Endothelial cell of umbilical vein (primary cell): ENCODE measurements at regions of chr13 and their contacts with region 1.

Region 1: DNA sequence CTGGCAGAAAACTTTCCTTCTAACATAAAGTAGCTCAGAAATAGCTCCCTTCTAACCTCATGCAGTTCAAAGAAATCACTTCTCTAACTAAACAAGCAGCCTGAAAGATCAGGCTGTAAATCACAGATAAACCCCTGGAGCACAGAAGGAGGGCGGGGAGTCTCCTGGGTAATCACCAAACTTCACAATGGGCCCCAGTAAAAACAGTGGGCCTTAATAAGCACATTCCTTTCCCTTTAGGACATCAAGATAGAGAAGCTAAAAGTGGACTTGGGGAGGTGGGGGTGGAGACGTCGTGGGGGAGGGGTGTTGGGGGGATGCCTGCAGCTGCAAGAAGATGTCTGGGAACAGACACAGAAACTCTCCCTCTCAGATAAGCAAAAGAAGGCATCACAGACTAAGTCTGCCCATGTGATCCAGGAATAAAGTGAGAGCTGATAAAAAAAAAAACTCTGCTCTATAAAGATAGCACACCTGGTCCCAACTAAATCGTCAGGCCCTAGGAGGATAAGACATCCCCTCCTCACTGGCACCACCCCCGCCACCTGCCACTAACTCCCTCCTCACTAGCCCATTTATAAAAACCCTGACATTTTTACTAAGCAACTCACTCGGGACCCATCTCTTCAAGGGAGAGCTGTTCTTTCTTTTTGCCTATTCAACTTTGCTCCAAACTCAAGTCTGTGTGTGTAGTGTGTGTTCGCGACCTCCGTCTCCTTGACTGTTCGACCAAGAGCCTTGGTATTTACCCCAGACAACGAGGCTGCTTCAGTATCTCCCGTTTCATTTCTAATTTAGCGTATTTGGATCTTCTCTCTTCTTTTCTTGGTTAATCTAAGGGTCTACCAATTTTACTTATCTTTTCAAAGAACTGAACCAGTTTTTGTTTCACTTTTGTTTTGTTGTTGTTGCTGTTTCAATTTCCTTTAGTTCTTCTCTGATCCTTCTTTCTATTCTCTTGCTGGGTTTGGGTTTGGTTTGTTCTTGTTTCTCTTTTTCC is 31.7 kb downstream of the DNAJC15 start:
- DNase-seq: peak; percentile 69
- H3K4me3 ChIP-seq: peak overlapping the region; percentile 37 to 85 (median 69)
- H3K27ac ChIP-seq: peak overlapping the region; percentile 79
- H3K4me1 ChIP-seq: peaks cover 29% of the 10 kb centered on the region
- H3K27me3 ChIP-seq: no peaks in the 10 kb centered on the region
- CTCF ChIP-seq: no peak
- POLR2A ChIP-seq: no peak

Region 2: DNA sequence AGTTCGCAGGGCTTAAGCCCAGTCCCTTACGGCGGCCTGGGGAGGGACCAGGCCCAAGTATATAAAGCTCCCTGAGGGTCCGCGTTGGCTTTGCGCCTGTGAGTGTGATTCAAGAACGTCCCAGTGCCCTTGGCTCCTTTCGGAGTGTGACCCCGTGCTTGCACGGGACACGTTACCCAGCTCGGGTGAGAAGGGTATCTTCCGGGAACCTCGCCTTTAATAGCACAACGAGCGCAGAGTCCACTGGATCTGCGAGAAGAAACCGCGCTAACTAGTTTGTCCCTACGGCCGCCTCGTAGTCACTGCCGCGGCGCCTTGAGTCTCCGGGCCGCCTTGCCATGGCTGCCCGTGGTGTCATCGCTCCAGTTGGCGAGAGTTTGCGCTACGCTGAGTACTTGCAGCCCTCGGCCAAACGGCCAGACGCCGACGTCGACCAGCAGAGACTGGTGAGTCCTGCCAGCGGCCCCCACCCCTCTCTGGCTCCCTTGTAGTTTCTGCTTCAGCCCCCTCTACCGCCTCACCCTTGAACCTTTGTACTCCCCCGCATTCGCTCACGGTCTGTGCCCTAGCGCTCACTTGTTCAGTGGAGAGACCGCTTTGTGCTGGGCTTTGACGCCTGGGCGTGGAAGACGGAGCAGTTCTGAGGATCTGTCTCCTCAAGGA is 31.7 kb before region 1 on chr13 and contains the start of gene DNAJC15:
- CTCF ChIA-PET with region 1: interaction called, 6 read pairs
- POLR2A ChIA-PET with region 1: no interaction called
- dilution Hi-C with region 1: no loop called
- intact Hi-C with region 1: loop called (anchors 1 kb)
- DNase-seq: peak; percentile 91
- H3K4me3 ChIP-seq: peak within 1 kb of the TSS; percentile 62 to 92 (median 70)
- H3K27ac ChIP-seq: peak within 1 kb of the TSS; percentile 59
- H3K4me1 ChIP-seq: peaks cover 2% of the 10 kb centered on the region
- H3K27me3 ChIP-seq: no peaks in the 10 kb centered on the region
- CTCF ChIP-seq: no peak
- POLR2A ChIP-seq: peak; percentile 89
- total RNA-seq, gene DNAJC15: 20.9 and 21.8 TPM in 2 replicates